ENCODE measurements at regions of chr12 and their contacts with region 1.

Region 1: DNA sequence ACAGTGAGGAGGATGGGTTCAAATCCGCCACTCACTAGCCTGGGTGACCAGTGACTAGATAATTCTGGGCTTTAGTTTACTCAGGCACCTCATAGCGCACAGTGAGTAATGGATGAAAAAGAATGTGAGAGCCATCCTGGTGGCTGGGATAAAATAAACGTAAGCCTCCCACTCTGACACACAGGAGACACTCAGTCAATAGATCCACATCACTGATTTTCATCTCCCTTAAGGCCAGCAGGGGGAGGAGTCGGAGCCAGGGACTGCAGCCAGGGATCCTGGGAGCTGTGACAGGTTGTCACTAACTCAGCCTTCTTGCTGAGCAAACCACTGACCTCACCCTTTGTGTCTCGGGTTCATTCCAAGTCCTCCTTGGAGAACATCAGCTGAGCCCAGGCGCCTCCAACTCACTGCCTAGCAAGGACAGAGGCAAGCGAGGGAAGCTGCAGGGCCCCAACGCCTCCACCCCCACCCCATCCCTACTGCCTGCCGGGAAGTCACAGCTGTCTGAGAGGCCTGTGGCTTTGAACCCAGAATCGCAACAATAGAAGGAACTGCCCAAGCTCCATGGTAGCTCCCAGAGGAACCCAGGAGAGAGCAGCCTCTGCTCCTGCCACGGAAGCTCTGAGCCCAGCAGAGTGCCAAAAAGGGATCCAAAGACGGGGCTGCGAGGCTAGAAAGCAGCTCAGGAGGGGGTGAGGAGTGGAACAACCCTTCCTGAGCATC is 30.7 kb downstream of the PXN start:
- DNase-seq: no peak
- H3K4me3 Mint-ChIP-seq: no peak overlapping the region
- H3K27ac Mint-ChIP-seq: no peak overlapping the region
- H3K4me1 Mint-ChIP-seq: peaks cover 89% of the 10 kb centered on the region
- H3K27me3 Mint-ChIP-seq: no peaks in the 10 kb centered on the region

Region 2: GRCh38 chr12:120211904-120212283 is 22.9 kb before region 1 on chr12:
- CTCF ChIA-PET with region 1: no interaction called
- POLR2A ChIA-PET with region 1: no interaction called
- DNase-seq: no peak
- H3K4me3 Mint-ChIP-seq: no peak overlapping the region
- H3K27ac Mint-ChIP-seq: peak overlapping the region; percentile 73
- H3K4me1 Mint-ChIP-seq: no peaks in the 10 kb centered on the region
- H3K27me3 Mint-ChIP-seq: no peaks in the 10 kb centered on the region

Region 3: GRCh38 chr12:120249875-120250795 is 15.3 kb after region 1 on chr12:
- CTCF ChIA-PET with region 1: interaction called, 546 read pairs
- POLR2A ChIA-PET with region 1: interaction called, 6 read pairs
- DNase-seq: peak; percentile 59
- H3K4me3 Mint-ChIP-seq: peak overlapping the region; percentile 65
- H3K27ac Mint-ChIP-seq: peak overlapping the region; percentile 97
- H3K4me1 Mint-ChIP-seq: peaks cover 82% of the 10 kb centered on the region
- H3K27me3 Mint-ChIP-seq: no peaks in the 10 kb centered on the region

Region 4: GRCh38 chr12:120265473-120266179 is 30.8 kb after region 1 on chr12 and contains the start of gene PXN:
- CTCF ChIA-PET with region 1: interaction called, 546 read pairs
- POLR2A ChIA-PET with region 1: no interaction called
- DNase-seq: peak; percentile 88
- H3K4me3 Mint-ChIP-seq: peak within 1 kb of the TSS; percentile 88
- H3K27ac Mint-ChIP-seq: peak within 1 kb of the TSS; percentile 83
- H3K4me1 Mint-ChIP-seq: peaks cover 39% of the 10 kb centered on the region
- H3K27me3 Mint-ChIP-seq: no peaks in the 10 kb centered on the region
- total RNA-seq, gene PXN: 201 to 236 TPM

Region 5: GRCh38 chr12:120356567-120357030 is 121.8 kb after region 1 on chr12:
- CTCF ChIA-PET with region 1: no interaction called
- POLR2A ChIA-PET with region 1: no interaction called
- DNase-seq: peak; percentile 75
- H3K4me3 Mint-ChIP-seq: no peak overlapping the region
- H3K27ac Mint-ChIP-seq: no peak overlapping the region
- H3K4me1 Mint-ChIP-seq: no peaks in the 10 kb centered on the region
- H3K27me3 Mint-ChIP-seq: peaks cover 17% of the 10 kb centered on the region